GM18951 (cell line): ENCODE measurements at regions of chr3 and their contacts with region 1.

Region 1: DNA sequence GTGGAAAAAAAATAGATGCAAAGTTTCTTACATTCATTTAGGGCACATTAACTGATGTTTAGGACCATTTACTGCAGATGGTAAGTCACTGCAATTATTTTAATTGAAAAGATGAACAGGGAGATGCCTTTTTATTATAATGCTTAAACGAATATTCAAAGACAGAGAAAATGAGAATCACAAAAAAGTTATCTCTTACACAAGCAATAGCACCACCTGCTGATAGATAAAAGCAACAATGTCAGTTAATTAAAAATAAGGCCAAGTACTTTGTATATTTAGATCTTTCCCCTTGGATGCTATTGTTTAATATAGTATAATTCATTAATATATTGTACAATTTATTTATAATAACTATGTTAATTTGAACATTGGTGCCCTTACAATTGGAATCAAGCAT is 55.9 kb downstream of the IFT80 start:
- POLR2A ChIP-seq: no peak

Region 2: DNA sequence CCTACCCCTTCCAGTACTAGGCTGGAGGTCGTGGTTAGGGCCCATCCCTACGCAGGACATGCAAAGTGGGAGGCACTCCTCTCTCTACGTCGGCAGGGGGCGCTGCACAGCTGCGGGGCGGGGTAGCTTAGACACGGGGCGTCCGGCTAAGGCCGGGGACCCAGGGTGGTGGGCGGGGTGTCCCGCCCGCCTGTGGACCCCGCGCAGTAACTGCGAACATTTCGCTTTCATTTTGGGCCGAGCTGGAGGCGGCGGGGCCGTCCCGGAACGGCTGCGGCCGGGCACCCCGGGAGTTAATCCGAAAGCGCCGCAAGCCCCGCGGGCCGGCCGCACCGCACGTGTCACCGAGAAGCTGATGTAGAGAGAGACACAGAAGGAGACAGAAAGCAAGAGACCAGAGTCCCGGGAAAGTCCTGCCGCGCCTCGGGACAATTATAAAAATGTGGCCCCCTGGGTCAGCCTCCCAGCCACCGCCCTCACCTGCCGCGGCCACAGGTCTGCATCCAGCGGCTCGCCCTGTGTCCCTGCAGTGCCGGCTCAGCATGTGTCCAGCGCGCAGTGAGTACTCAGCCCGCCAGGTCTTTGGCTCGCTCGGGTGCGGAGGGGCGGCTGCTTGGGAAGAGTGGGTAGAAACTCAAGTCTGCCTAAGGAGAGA is 354.4 kb before region 1 on chr3 and contains the start of gene IL12A:
- in situ Hi-C with region 1: no loop called
- POLR2A ChIP-seq: peak; percentile 69

Region 3: GRCh38 chr3:160027541-160028195 is 315.5 kb before region 1 on chr3:
- in situ Hi-C with region 1: loop called (anchors 25 kb)
- POLR2A ChIP-seq: no peak